Activated CD8-positive, alpha-beta T cell treated with anti-CD3 and anti-CD28 coated beads, Interleukin-2, amount 10 ng/mL, durations not matched to agents 7 days and 5 days (primary cell): ENCODE measurements at regions of chr5 and their contacts with region 1.

Region 1: GRCh38 chr5:65562731-65563701 is at the starts of genes CENPK and PPWD1:
- DNase-seq: peak; percentile 98
- ATAC-seq: peak; percentile 99
- H3K4me3 Mint-ChIP-seq: peak within 1 kb of the TSS; percentile 91
- H3K27ac Mint-ChIP-seq: peak within 1 kb of the TSS; percentile 97
- H3K4me1 Mint-ChIP-seq: peaks cover 51% of the 10 kb centered on the region
- H3K27me3 Mint-ChIP-seq: no peaks in the 10 kb centered on the region
- total RNA-seq, gene CENPK: 97.8 to 110 TPM
- total RNA-seq, gene PPWD1: 46.5 to 47.7 TPM

Region 2: DNA sequence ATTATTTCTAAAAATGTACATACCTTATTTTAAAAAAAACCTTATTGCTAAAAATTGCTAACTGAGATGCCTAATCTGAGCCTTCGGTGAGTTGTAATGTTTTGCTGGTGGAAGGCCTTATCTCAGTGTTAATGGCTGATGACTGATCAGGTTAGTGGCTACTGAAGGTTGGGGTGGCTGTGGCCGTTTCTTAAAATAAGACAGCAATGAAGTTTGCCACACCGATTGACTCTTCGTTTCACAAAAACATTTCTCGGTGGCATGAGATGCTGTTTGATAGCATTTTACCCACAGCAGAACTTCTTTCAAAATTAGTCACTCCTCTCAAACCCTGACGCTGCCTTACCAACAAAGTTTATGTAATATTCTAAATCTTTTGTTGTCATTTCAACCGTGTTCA is 14.7 kb before region 1 on chr5:
- CTCF ChIA-PET with region 1: interaction called, 3 read pairs
- POLR2A ChIA-PET with region 1: interaction called, 17 read pairs
- DNase-seq: no peak
- ATAC-seq: no peak
- H3K4me3 Mint-ChIP-seq: no peak overlapping the region
- H3K27ac Mint-ChIP-seq: no peak overlapping the region
- H3K4me1 Mint-ChIP-seq: peaks cover 10% of the 10 kb centered on the region
- H3K27me3 Mint-ChIP-seq: no peaks in the 10 kb centered on the region

Region 3: DNA sequence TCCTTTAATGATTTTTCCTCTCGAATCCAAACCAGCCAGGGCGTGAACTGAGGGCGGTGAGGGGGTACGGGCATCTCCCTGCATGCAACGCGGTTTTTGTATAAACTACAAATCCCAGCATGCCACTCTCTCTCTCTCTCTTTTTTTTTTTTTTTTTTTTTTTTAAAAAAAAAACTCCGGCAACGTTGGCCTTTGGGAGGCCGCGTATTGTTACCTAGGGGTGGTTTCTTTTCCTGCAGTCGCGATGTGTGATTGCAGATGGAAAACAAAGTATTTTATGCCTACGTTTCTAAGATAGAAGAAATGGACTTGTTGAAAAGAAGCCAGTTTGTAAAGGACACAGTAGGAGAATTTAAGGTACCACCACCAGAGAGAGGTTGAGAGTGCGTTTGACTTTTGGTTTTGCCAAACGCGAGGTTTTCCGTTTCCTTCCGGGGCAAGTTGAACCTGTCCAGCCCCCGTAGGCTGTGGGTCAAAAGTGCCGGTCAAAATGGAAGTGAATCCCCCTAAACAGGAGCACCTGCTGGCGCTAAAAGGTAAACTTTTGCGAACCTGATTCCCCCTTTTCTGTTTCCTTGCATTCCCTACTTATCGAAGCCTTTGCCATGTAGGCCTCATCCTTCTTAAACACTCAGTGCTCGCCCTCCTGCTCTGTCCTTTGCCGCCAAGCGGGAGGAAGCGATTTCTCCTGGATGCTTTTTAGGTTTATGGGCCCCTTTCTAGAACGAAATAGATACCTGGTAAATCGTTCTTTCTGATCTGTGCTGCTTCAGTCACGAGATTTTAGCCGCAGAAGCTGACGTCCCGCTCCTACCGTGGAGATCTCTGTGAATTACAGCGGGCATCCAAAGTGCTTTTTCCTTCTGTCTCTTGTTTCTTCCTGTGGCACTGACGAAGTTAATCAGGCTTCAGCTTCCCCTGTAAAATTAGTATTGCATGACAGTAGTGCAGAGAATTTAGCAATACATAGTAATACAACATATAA is 61.8 kb after region 1 on chr5 and contains the starts of genes SHLD3 and TRAPPC13:
- CTCF ChIA-PET with region 1: interaction called, 4 read pairs
- POLR2A ChIA-PET with region 1: interaction called, 25 read pairs
- DNase-seq: peak; percentile 90
- ATAC-seq: peak; percentile 79
- H3K4me3 Mint-ChIP-seq: peak within 1 kb of the TSS; percentile 89
- H3K27ac Mint-ChIP-seq: peak within 1 kb of the TSS; percentile 97
- H3K4me1 Mint-ChIP-seq: peaks cover 35% of the 10 kb centered on the region
- H3K27me3 Mint-ChIP-seq: no peaks in the 10 kb centered on the region
- total RNA-seq, gene SHLD3: 5.1 to 5.3 TPM
- total RNA-seq, gene TRAPPC13: 21.9 to 22.2 TPM

Region 4: GRCh38 chr5:65721720-65722574 is 158.9 kb after region 1 on chr5 and contains the starts of genes NLN and SGTB:
- CTCF ChIA-PET with region 1: no interaction called
- POLR2A ChIA-PET with region 1: interaction called, 15 read pairs
- DNase-seq: peak; percentile 83
- ATAC-seq: peak; percentile 96
- H3K4me3 Mint-ChIP-seq: peak within 1 kb of the TSS; percentile 86
- H3K27ac Mint-ChIP-seq: peak within 1 kb of the TSS; percentile 89
- H3K4me1 Mint-ChIP-seq: peaks cover 24% of the 10 kb centered on the region
- H3K27me3 Mint-ChIP-seq: no peaks in the 10 kb centered on the region
- total RNA-seq, gene NLN: 13.9 to 14.3 TPM
- total RNA-seq, gene SGTB: 17.5 to 18.4 TPM